Right ventricle myocardium superior (tissue), 1 donor: ENCODE measurements at regions of chr17 and their contacts with region 1.

Region 1: GRCh38 chr17:12545877-12546513 is 119.7 kb upstream of the MYOCD start:
- DNase-seq: no peak
- ATAC-seq: peak; percentile 86

Region 2: GRCh38 chr17:12180644-12181261 is 365.2 kb before region 1 on chr17:
- intact Hi-C with region 1: loop called (anchors 10 kb)
- DNase-seq: no peak
- ATAC-seq: peak; percentile 64

Region 3: GRCh38 chr17:12599186-12599920 is 53.4 kb after region 1 on chr17:
- intact Hi-C with region 1: no loop called
- DNase-seq: no peak
- ATAC-seq: no peak

Region 4: GRCh38 chr17:12744298-12744697 is 198.3 kb after region 1 on chr17:
- intact Hi-C with region 1: loop called (anchors 10 kb)
- DNase-seq: peak; percentile 63
- ATAC-seq: peak; percentile 89

Region 5: DNA sequence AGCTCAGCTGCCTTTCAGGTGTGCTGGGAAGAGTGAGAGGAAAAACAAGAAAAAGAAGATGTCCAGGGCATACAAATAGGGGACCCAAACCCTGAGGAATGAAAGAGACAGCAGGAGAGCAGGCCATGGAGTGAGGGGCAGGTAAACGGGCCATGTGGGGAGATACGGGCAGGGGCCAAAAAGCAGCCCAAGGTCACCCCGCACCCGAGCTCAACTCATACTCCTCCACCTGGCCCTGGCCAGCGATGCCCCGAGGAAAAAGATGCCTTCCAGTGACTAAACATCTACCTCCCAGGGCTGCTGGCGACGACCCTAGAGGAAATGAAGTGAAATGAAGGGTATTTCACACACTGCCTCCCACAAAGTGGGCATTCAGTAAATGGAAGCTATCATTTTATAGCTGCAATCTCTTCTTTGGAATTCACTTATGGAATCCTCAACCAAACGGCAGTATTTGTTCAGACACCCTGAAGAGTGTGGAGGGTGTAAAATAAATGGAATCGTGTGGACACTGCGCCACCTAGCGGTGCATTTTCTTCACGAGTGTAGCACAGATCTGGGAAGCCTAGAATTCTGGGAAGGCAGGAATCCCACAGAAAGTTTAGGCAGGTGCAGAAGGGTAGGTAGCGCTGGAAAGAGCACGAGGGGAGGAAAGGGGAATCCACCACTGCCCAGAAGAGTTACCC is 456.9 kb after region 1 on chr17:
- intact Hi-C with region 1: loop called (anchors 10 kb)
- DNase-seq: peak; percentile 89
- ATAC-seq: peak; percentile 95